ENCODE measurements at regions of chr19 and their contacts with region 1.

Region 1: DNA sequence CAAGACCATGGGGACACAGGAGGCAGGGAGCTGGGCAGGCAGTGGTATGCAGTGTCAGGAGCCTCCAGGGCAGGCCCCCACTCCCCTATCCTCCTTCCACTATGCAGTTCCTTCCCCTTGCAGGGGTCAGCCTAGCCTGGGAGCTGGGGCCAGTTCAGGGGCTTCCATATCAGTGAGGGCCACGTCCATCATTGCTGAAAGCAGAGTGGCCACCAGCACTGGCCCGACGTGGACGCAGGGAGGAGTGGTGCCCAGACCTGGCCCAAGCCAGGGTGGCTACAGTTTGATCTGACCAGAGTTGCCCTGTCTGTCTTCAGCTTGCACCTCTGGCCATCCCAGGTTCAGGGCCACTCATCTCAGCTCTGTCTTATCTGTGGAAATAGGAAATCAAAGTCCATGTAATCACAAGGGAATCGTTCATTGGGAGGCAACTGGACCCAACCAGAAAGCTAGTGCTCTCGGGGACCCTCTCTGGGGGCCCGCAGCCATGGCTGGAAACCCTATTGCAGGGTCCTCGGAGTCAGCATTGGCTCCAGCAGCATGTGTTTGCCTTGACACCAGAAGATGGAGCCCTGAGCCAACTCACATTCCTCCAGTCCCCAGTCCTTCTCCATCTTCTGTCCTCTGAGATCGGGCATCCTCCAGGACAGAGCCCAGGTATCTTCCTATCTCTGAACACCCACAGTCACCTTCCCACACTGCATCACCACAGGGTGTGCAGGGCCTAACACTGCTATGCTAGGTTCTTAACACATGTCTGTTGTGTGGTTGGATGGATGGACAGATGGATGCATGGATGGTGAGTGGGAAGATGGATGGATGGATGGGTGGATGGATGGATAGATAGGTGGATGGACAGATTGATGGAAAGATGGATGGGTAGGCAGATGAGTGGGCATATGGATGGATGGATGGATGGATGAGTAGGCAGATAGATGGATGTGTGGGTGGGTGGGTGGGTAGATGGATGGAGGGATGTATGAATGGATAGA is 75.7 kb upstream of the KCTD15 start:
- DNase-seq: no peak
- H3K4me3 ChIP-seq: no peak overlapping the region
- H3K27ac ChIP-seq: no peak overlapping the region
- H3K4me1 ChIP-seq: no peaks in the 10 kb centered on the region
- H3K27me3 ChIP-seq: peaks cover 2% of the 10 kb centered on the region
- CTCF ChIP-seq: no peak

Region 2: GRCh38 chr19:33260628-33261418 is 460.2 kb before region 1 on chr19:
- CTCF ChIA-PET with region 1: no interaction called
- dilution Hi-C with region 1: loop called (anchors 10 kb)
- in situ Hi-C with region 1: no loop called
- intact Hi-C with region 1: no loop called
- DNase-seq: no peak
- H3K4me3 ChIP-seq: no peak overlapping the region
- H3K27ac ChIP-seq: no peak overlapping the region
- H3K4me1 ChIP-seq: no peaks in the 10 kb centered on the region
- H3K27me3 ChIP-seq: no peaks in the 10 kb centered on the region
- CTCF ChIP-seq: no peak

Region 3: DNA sequence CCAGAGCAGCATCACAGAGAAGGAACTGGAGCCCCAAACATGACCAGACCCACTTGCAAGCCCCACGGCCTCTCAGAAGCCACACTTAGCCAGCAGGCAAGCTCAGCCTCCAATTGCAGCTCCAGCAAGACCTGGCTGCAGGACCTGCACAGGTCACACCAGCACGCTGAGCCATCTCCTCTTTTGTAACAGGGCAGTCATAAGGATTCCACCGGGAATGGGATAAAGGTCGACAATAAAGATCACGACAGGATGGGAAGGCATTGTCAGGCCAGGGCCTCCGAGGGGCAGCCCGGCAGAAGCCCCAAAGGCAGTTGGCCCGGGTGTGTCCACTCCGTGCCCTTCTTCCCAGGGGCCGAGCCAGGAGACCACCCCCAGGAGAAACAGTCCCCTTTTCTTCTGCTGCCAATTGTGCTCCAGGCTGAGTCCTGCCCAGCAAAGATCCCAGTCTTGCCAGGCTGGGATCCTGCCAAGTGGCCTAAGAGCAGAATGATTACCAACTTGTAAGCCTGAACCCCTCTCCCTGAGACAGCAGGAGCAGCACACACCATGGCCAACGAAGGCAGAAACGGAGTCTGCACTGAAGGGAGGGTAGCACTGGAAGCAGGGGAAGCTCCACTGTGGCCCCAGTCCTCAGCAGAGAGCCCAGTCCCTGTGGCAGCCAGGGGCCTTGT is 211.9 kb before region 1 on chr19:
- CTCF ChIA-PET with region 1: no interaction called
- dilution Hi-C with region 1: loop called (anchors 10 kb)
- in situ Hi-C with region 1: no loop called
- intact Hi-C with region 1: no loop called
- DNase-seq: no peak
- H3K4me3 ChIP-seq: no peak overlapping the region
- H3K27ac ChIP-seq: no peak overlapping the region
- H3K4me1 ChIP-seq: peaks cover 8% of the 10 kb centered on the region
- H3K27me3 ChIP-seq: no peaks in the 10 kb centered on the region
- CTCF ChIP-seq: no peak

Region 4: GRCh38 chr19:33558856-33559255 is 162.1 kb before region 1 on chr19:
- CTCF ChIA-PET with region 1: no interaction called
- dilution Hi-C with region 1: loop called (anchors 10 kb)
- in situ Hi-C with region 1: no loop called
- intact Hi-C with region 1: no loop called
- DNase-seq: peak; percentile 3
- H3K4me3 ChIP-seq: no peak overlapping the region
- H3K27ac ChIP-seq: no peak overlapping the region
- H3K4me1 ChIP-seq: no peaks in the 10 kb centered on the region
- H3K27me3 ChIP-seq: no peaks in the 10 kb centered on the region
- CTCF ChIP-seq: no peak

Measured in mammary epithelial cell (primary cell).